BJ (cell line): ENCODE measurements at regions of chr19 and their contacts with region 1.

Region 1: GRCh38 chr19:47243776-47244547 is 12.4 kb upstream of the CCDC9 start:
- DNase-seq: peak; percentile 80
- H3K4me3 ChIP-seq: peak overlapping the region; percentile 55
- H3K27me3 ChIP-seq: no peaks in the 10 kb centered on the region
- CTCF ChIP-seq: peak; percentile 93

Region 2: GRCh38 chr19:47130591-47131227 is 113.3 kb before region 1 on chr19 and contains the start of gene SAE1:
- CTCF ChIA-PET with region 1: interaction called, 19 read pairs
- POLR2A ChIA-PET with region 1: no interaction called
- DNase-seq: peak; percentile 94
- H3K4me3 ChIP-seq: peak within 1 kb of the TSS; percentile 77
- H3K27me3 ChIP-seq: no peaks in the 10 kb centered on the region
- CTCF ChIP-seq: peak; percentile 68
- polyA plus RNA-seq, gene SAE1: 138 and 156 TPM in 2 replicates

Region 3: GRCh38 chr19:47197141-47197540 is 46.8 kb before region 1 on chr19:
- CTCF ChIA-PET with region 1: interaction called, 11 read pairs
- POLR2A ChIA-PET with region 1: no interaction called
- DNase-seq: no peak
- H3K4me3 ChIP-seq: no peak overlapping the region
- H3K27me3 ChIP-seq: no peaks in the 10 kb centered on the region
- CTCF ChIP-seq: no peak

Region 4: GRCh38 chr19:47231215-47231984 is 12.6 kb before region 1 on chr19:
- CTCF ChIA-PET with region 1: interaction called, 44 read pairs
- POLR2A ChIA-PET with region 1: interaction called, 9 read pairs
- DNase-seq: peak; percentile 46
- H3K4me3 ChIP-seq: peak overlapping the region; percentile 28
- H3K27me3 ChIP-seq: no peaks in the 10 kb centered on the region
- CTCF ChIP-seq: no peak

Region 5: GRCh38 chr19:47357788-47358680 is 114.1 kb after region 1 on chr19:
- CTCF ChIA-PET with region 1: no interaction called
- POLR2A ChIA-PET with region 1: no interaction called
- DNase-seq: no peak
- H3K4me3 ChIP-seq: no peak overlapping the region
- H3K27me3 ChIP-seq: no peaks in the 10 kb centered on the region
- CTCF ChIP-seq: 0 out of 2 replicates have a peak, but pooled peaks have one; percentile 12

Region 6: DNA sequence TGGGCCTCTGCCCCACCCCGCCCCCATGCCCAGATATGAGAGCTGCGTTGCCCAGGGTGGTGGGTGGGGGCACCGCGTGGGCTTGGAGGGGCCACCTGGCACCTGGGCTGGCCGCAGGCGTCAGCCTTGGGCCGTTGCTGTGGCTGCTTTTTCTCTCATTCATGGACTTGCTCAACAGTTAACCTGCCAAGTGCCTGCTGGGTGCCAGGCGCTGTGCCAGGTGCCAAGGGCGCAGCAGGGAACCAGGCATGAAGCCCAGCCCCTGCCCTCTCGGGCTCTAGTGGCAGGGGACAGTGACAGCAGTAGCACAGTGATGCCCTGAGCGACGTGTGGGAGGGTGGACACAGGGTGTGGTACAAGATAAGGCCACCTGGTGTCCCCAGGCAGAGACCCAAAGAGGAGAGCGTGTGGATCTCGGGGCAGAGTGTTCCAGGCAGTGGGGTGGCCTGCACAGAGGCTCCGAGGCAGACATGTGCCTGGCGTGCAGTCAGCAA is 133.3 kb after region 1 on chr19:
- CTCF ChIA-PET with region 1: no interaction called
- POLR2A ChIA-PET with region 1: no interaction called
- DNase-seq: no peak
- H3K4me3 ChIP-seq: no peak overlapping the region
- H3K27me3 ChIP-seq: no peaks in the 10 kb centered on the region
- CTCF ChIP-seq: no peak

Region 7: GRCh38 chr19:47398707-47399597 is 155.0 kb after region 1 on chr19:
- CTCF ChIA-PET with region 1: no interaction called
- POLR2A ChIA-PET with region 1: no interaction called
- DNase-seq: no peak
- H3K4me3 ChIP-seq: no peak overlapping the region
- H3K27me3 ChIP-seq: peaks cover 5% of the 10 kb centered on the region; the same call in 1 of the 2 replicates
- CTCF ChIP-seq: no peak